GM10248 (cell line): ENCODE measurements at regions of chr18 and their contacts with region 1.

Region 1: DNA sequence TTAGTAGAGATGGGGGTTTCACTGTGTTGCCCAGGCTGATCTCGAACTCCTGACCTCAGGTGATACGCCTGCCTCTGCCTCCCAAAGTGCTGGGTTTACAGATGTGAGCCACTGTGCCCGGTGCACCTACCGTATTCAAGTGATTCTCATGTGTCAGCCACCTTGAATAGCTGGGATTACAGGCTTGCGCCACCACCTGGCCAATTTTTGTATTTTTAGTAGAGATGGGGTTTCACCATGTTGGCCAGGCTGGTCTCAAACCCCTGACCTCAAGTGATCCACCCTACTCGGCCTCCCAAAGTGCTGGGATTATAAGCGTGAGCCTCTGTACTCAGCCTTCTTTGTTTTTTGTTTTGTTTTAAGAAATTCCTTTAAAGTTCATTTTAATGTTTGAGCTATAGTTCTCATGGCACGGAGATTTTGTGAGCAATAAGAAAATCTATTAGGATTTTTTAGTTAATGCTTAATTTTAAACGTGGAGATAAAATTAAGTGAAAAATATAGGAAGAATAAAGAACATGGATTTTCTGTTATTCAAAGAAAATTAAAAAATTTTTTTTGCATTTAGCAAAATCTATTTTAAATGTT is 242.6 kb downstream of the PHLPP1 start:
- DNase-seq: no peak
- CTCF ChIP-seq: peak; percentile 40

Region 2: GRCh38 chr18:61702007-61702406 is 1256.0 kb before region 1 on chr18:
- CTCF ChIA-PET with region 1: no interaction called
- POLR2A ChIA-PET with region 1: no interaction called
- DNase-seq: no peak
- CTCF ChIP-seq: no peak

Region 3: GRCh38 chr18:62637807-62638687 is 319.9 kb before region 1 on chr18:
- CTCF ChIA-PET with region 1: interaction called, 15 read pairs
- POLR2A ChIA-PET with region 1: no interaction called
- DNase-seq: peak; percentile 72
- CTCF ChIP-seq: peak; percentile 56

Region 4: DNA sequence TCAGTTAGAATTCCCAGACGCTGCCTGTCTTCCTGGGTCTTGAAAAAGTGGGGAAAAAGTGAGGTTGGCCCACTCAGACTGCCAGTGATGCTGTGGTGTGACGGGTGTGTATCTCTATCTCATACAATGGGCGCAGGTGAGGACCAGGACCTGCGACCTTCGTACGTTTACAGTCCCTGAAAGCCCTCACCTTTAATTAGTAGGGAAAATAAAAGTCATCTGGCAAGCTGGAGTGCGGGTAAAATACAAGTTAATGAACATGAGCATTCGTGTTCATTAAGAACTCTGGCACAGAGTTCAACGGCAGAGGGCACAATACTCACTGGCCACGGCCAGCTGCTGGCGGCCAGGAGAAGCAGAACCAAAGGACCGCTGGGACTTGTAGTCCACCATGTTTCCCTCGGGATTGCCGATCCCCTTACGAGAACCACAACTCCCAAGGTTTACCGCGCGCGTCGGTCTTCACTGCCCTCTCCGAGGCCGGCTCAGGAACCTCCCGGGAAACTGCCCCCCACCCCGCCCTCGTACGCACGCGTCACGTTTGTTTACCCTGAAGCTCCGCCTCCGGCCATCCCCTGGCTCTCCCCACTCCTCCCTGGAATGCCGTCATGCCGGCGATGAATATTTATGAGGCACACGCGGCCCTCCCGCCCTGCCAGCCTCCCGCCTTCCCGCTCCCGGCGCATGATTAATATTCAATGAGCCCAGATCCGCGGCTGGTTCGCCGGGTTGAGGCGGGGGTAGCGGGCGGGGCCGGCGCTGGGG is 243.1 kb before region 1 on chr18:
- CTCF ChIA-PET with region 1: interaction called, 32 read pairs
- POLR2A ChIA-PET with region 1: interaction called, 3 read pairs
- DNase-seq: peak; percentile 94
- CTCF ChIP-seq: peak; percentile 77

Region 5: DNA sequence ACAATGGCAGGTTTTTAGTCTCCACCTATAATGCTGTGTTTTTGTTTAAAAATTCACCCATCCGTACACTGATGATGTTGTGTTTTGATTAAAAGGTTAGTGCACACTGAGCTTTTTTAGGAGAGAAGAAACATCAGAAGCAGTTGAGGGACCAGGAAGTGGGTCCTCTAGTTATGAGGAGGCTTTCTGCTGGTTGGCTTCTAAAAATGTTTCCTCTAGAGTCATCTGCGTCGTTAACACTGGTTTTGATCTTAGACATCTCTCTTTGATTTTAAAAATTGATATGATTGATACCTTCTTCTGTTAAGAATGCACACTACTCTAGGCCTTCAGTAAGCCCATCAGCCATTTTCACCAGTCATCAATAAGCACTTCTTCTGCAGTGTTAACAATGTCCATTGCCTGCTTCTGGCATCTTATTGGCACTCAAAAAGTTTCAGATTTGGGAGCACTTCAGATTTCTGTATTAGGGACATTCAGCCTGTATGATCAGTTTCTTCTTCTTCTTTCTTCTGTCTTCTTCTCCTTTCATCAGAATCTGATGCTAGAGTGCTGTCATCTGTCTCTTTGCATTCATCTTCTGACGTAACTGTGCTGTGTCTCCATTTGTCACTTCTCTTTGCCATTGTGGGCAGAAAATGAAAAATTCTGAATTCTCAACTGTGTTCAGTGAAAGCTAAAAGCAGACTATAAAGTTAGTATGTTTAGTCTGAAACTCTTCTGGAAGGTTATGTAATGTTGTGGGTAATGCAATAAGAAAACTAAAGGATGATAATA is 186.3 kb before region 1 on chr18:
- CTCF ChIA-PET with region 1: no interaction called
- POLR2A ChIA-PET with region 1: no interaction called
- DNase-seq: peak; percentile 27
- CTCF ChIP-seq: no peak

Region 6: DNA sequence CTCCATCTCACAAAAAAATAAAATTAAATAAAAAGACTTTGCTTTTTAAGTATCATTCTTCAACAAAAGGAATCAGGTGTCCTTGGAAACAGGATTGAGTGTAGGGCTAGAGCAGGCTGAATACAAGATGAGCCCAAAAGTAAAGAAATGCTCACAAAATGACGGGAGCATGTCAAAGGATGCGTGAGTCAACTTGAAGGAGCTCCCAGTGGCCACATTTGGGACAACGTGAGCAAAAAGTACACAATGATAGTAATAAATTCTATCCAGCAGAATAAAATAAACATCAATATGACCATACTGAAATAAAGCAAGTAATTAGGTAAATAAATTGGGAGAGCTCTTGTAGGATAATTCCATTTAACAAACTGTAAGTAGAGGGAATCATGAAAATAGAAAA is 22.0 kb before region 1 on chr18:
- CTCF ChIA-PET with region 1: no interaction called
- POLR2A ChIA-PET with region 1: no interaction called
- DNase-seq: no peak
- CTCF ChIP-seq: no peak

Region 7: DNA sequence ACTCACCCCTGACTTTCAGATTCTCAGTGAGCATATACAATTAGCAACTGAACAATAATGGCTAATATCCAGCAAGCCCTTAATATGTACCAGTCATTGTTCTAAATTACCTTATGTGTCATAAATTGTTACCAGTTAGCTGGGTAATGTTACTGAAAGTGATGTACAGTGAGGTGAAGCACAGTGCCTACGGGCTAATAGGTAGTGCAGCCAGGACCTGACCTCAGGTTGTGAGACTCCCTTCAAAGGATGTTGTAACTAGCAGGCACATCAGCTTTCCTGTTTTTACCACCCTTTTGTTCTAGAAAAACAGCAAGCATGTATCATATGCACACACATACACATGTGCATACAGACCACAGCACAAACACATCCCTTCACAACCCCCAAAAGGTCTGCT is 15.7 kb after region 1 on chr18:
- CTCF ChIA-PET with region 1: interaction called, 15 read pairs
- POLR2A ChIA-PET with region 1: no interaction called
- DNase-seq: no peak
- CTCF ChIP-seq: no peak